ENCODE measurements at regions of chr5 and their contacts with region 1.

Region 1: DNA sequence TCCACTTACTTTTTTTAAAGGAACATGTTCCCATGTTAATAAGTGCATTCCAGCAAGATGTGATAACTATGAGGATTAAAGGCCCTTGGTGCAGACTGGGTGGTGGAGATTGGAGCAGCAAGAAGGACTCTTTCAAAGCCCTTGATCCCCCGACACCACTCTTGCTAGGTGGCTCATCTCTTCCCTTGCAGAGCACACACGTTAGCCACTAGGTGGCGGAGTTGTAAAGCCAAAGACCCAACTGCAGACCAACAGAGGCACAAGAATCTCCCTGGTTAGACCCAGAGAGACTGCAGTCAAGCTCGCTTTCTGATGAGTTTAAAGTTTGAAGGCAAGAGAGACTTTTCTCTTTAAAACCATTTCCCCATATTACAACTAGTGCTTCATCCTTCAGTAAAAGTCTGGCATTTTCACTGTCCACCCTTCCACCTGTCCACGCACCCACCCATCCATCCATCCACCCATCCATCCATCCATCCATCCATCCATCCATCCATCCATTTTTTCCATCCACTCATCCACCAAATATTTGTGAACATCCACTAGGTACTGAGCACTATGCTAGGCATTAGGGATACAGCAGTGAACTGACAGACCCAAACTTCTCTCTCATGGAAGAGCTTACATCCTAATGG is 226.9 kb downstream of the MSX2 start:
- DNase-seq: peak; percentile 24
- H3K4me3 Mint-ChIP-seq: no peak overlapping the region
- H3K27ac Mint-ChIP-seq: no peak overlapping the region
- H3K4me1 Mint-ChIP-seq: no peaks in the 10 kb centered on the region
- H3K27me3 Mint-ChIP-seq: no peaks in the 10 kb centered on the region

Region 2: GRCh38 chr5:175444060-175444904 is 493.0 kb after region 1 on chr5 and contains the start of gene DRD1:
- intact Hi-C with region 1: loop called (anchors 1 kb)
- DNase-seq: peak; percentile 22
- H3K4me3 Mint-ChIP-seq: peak within 1 kb of the TSS; percentile 43
- H3K27ac Mint-ChIP-seq: no peak within 1 kb of the TSS
- H3K4me1 Mint-ChIP-seq: peaks cover 1% of the 10 kb centered on the region
- H3K27me3 Mint-ChIP-seq: peaks cover 67% of the 10 kb centered on the region
- total RNA-seq, gene DRD1: not detected in 2 replicates

Region 3: GRCh38 chr5:175457466-175457865 is 506.2 kb after region 1 on chr5:
- intact Hi-C with region 1: loop called (anchors 5 kb)
- DNase-seq: no peak
- H3K4me3 Mint-ChIP-seq: no peak overlapping the region
- H3K27ac Mint-ChIP-seq: no peak overlapping the region
- H3K4me1 Mint-ChIP-seq: peaks cover 19% of the 10 kb centered on the region
- H3K27me3 Mint-ChIP-seq: peaks cover 34% of the 10 kb centered on the region

Measured in activated T-helper 2 cell treated with anti-CD3 and anti-CD28 coated beads, Interferon-gamma antibody, Interleukin-2, Interleukin-4, amounts not matched to agents 10 μg/mL and 5 μg/mL and 100 μg/mL, durations not matched to agents 14 hours and 24 hours and 36 hours (primary cell).